Posterior cingulate gyrus (tissue), 11 donors: ENCODE measurements at regions of chr4 and their contacts with region 1.

Region 1: DNA sequence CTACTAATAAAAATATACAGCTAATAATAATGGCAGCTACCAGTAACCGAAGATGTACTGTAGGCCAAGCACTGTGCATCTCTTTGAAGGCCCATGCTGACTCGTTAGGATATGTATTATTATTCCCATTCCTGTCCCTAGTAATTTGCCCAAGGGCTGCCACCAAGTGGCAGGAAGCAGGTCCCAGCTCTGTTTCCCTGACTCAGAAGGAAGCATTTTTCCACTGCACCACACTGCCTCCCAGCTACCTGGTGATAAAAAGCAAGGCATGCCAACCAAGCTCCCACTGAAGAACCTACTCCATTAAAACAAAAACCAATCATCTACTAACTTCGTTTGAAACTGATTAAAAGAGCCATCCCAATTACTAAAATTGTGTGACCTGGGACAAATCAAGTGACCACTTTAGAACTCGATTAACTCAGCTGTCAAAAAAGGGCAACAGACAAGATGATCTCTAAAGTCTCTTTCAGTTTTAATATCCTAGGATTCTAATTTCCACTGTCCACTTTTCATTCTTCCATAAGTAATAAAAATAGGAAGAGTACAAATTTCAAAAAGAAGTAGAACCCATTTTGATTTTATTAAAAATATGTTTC is 24.3 kb upstream of the PGM2 start:
- DNase-seq: peak in 9 of 10 donors; percentile 15 to 86 (median 39)

Region 2: GRCh38 chr4:37452952-37453280 is 349.3 kb before region 1 on chr4:
- intact Hi-C with region 1: loop called (anchors 5 kb)
- DNase-seq: peak in 4 of 10 donors; percentile 32 to 70 (median 50)

Region 3: DNA sequence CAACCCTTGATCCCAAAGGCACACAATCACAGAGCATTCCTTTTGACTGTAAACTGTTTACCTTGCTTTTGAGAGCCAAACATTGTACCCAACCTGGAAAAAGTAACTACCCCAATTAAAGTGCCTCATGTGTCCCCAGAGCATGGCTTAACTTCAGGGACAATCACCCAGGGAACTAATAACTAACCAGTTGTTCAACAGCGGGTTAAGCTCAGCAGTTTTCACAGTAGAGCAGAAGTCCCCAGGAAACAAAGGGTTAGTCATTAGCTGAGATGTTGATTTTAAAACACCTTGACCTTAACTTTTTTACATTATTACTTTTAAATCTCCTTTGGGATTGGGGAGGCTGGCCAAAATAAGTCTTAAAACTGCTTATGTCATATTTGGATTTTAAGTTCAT is 210.8 kb before region 1 on chr4:
- intact Hi-C with region 1: no loop called
- DNase-seq: no peak

Region 4: GRCh38 chr4:37603070-37603468 is 199.1 kb before region 1 on chr4:
- intact Hi-C with region 1: loop called (anchors 1 kb)
- DNase-seq: peak; percentile 67 to 97 (median 87)

Region 5: DNA sequence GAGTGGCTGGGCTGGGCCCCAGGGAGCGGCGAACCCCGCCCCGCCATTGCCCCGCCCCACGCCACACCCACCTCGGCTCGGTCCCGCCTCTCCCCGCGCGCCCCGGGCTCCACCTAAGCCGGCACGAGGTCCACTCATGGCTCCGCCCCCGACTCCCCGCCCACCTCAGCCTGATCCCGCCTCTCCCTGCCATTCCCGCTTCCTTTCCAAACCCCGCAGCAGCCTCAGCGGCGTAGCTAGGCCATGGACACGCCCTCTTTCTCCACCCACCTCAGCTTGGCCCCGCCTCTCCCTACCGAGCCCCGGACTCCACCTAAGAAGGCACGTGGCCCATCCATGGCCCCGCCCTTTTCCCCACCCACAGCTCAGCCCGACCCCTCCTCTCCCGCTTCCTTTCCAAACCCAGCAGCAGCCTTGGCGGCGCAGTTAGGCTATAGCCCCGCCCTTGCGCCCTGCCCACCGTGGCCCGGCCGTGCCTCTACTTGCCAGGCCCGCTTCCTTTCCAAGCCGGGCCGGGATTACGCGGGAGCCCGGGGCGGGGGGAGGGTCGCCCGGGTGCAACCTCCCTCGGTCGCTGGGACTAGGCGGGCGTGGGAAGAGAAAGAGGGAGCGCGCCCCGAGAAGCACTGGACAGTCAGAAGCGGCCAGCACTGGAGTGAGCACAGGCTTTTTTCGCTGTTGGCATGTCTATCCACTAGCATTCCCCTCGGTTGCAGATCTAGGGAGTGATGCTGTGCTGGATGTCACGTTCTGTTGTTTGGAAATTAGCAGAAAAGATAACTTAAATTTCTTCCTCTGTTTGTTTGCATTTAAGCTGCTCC is 115.6 kb before region 1 on chr4 and contains the start of gene RELL1:
- intact Hi-C with region 1: loop called (anchors 5 kb)
- DNase-seq: peak; percentile 99 to 100 (median 99)

Region 6: DNA sequence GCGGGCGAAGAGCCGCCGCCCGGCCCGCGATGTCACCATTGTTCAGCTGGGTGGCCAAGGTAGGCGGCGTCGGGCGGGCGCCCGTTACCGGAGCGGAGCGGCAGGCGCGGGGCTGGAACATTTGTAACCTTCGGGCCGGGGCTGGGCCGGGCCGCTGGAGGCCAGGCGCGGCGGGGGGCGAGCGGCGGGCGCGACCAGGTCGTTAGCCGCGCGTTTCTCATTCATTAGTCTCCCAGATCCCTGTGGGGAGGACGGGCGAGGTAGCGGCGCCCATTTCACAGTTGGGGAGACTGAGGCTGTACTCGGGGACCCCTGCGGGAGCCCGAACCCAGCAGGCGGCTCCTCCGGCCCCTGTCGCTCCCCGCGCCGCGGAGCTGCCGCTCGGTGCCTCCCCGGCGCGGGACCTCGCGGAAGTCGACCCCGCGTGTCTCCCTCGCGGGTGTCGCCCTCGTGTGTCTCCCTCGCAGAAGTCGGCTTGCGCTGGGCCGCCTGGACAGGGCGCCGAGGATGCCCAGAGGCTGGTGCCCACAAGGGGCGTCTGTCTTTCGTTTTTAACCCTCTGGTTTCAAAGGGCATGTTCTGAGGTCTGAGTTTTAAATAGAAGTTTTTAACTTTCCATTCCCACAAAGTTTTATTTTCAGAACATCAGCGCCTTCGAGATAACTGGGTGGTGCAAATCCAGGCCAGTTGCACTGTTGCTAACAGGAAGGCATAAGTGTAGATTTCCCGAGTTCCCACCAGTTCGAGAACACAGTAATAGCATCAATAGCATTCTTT is 175.5 kb after region 1 on chr4:
- intact Hi-C with region 1: loop called (anchors 5 kb)
- DNase-seq: peak; percentile 36 to 96 (median 70)

Region 7: GRCh38 chr4:38034986-38035882 is 233.1 kb after region 1 on chr4:
- intact Hi-C with region 1: loop called (anchors 1 kb)
- DNase-seq: no peak